ENCODE measurements at regions of chr13 and their contacts with region 1.

Region 1: DNA sequence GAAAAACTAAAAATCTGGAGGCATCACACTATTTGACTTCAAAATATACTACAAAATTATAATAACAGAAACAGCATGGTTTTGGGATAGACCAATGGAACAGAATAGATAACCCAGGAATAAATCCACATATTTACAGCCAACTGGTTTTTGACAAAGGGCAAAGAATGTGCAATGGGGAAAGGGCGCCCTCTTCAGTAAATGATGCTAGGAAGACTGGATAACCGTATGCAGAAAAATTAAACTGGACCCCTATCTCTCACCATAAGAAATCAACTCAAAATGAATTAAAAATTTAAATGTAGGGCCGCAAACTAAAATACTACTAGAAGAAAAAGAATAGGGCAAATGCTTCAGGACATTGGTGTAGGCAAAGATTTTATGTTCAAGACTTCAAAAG is 440.5 kb upstream of the SGCG start:
- DNase-seq: no peak
- ATAC-seq: no peak
- H3K4me3 ChIP-seq: no peak overlapping the region
- H3K27ac ChIP-seq: no peak overlapping the region
- H3K4me1 ChIP-seq: peaks cover 10% of the 10 kb centered on the region
- H3K27me3 ChIP-seq: no peaks in the 10 kb centered on the region
- CTCF ChIP-seq: peak; percentile 24; the same call in 1 of the 2 replicates
- EP300 ChIP-seq: no peak
- POLR2A ChIP-seq: no peak
- RAD21 ChIP-seq: no peak

Region 2: DNA sequence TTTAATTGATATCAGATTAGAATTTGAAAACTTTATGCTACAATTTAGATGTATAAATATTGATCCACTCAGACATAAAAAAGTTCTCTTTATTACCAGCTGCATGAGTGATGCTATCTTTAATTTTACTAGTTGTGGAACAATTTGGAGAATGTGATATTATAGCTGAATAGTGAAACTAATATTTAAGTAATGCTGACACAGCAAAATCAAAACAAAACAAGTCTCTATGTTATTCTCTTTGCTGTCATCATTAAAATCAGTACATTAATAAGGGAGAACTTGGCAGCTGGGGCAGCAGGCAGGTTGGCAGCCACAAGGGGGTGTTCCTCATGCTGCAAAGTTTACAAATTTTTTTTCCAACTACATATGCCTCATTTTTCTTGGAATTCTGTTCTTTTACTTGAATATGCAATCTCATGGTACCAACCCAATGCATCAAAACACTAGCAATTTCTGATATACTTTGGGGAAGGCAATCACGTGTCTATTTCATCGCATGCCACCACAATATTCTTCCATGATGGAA is 484.1 kb before region 1 on chr13:
- CTCF ChIA-PET with region 1: no interaction called
- POLR2A ChIA-PET with region 1: no interaction called
- in situ Hi-C with region 1: no loop called
- intact Hi-C with region 1: loop called (anchors 10 kb)
- DNase-seq: no peak
- ATAC-seq: no peak
- H3K4me3 ChIP-seq: no peak overlapping the region
- H3K27ac ChIP-seq: no peak overlapping the region
- H3K4me1 ChIP-seq: no peaks in the 10 kb centered on the region
- H3K27me3 ChIP-seq: no peaks in the 10 kb centered on the region
- CTCF ChIP-seq: no peak
- EP300 ChIP-seq: no peak
- POLR2A ChIP-seq: no peak
- RAD21 ChIP-seq: no peak

Region 3: DNA sequence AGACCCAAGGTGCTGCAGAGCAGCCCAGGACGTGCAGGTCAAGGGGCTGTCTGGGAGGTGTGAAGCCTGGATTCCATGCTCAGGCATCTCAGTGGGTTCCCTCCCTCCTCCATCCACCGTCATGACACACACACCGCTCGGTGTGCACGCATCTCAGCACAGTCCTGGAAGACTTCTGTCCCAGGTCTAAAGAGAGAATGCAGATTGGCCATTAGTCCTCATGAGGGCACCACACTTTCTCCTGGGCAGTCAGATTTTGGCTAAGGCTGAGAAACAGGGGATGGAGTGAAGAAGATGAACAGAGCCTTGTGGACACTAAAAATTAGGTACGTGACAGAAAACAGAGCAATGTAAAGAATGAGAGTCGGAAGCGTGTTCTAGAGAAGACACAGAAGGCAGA is 89.9 kb before region 1 on chr13:
- CTCF ChIA-PET with region 1: no interaction called
- POLR2A ChIA-PET with region 1: no interaction called
- in situ Hi-C with region 1: no loop called
- intact Hi-C with region 1: loop called (anchors 5 kb)
- DNase-seq: no peak
- ATAC-seq: no peak
- H3K4me3 ChIP-seq: no peak overlapping the region
- H3K27ac ChIP-seq: no peak overlapping the region
- H3K4me1 ChIP-seq: no peaks in the 10 kb centered on the region
- H3K27me3 ChIP-seq: peaks cover 0 to 3% of the 10 kb centered on the region in 2 experiments; a peak in 2 of 5 replicates
- CTCF ChIP-seq: no peak
- EP300 ChIP-seq: no peak
- POLR2A ChIP-seq: no peak
- RAD21 ChIP-seq: no peak

Measured in HepG2 (cell line).